AG04450 (cell line): ENCODE measurements at regions of chr1 and their contacts with region 1.

Region 1: GRCh38 chr1:234941321-234942011 is 187.2 kb downstream of the TOMM20 start:
- DNase-seq: no peak
- H3K4me3 ChIP-seq: no peak overlapping the region
- H3K27ac ChIP-seq: no peak overlapping the region
- H3K27me3 ChIP-seq: no peaks in the 10 kb centered on the region
- CTCF ChIP-seq: no peak

Region 2: DNA sequence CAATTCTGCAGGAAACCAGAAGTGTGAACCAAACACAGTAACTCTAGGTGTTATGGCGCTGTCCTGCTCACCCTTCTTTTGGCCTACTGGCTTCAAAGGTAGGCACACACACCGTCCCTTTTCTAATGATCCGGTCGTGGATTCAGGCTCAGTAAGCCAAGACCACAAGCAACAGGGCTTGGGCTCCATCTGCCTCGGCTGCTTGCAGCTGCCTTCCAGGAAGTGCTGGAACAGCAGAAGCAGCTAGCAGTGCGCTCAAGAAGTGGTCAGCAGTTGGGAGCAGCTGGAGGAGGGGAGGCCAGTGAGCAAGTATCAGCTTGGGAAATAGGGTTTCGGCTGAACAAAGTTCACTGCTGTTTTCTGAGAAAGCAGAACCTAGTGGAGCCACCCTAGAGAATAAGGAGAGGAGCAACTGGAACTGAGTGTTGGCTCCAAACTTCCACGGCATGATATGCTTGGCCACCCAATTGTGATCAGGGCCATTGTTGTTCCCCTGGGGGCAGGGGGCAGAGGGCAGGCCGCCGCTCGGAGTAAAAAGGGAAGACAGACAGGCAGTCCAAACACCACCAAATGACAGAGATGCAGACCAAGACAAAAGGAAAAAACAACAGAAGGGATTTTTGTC is 13.8 kb after region 1 on chr1:
- CTCF ChIA-PET with region 1: no interaction called
- POLR2A ChIA-PET with region 1: no interaction called
- DNase-seq: no peak
- H3K4me3 ChIP-seq: no peak overlapping the region
- H3K27ac ChIP-seq: peak overlapping the region; percentile 47
- H3K27me3 ChIP-seq: no peaks in the 10 kb centered on the region
- CTCF ChIP-seq: no peak

Region 3: GRCh38 chr1:234978397-234979295 is 37.2 kb after region 1 on chr1:
- CTCF ChIA-PET with region 1: no interaction called
- POLR2A ChIA-PET with region 1: no interaction called
- DNase-seq: no peak
- H3K4me3 ChIP-seq: no peak overlapping the region
- H3K27ac ChIP-seq: peak overlapping the region; percentile 98
- H3K27me3 ChIP-seq: no peaks in the 10 kb centered on the region
- CTCF ChIP-seq: 0 out of 2 replicates have a peak, but pooled peaks have one; percentile 17

Region 4: GRCh38 chr1:235145639-235146038 is 204.2 kb after region 1 on chr1:
- CTCF ChIA-PET with region 1: interaction called, 10 read pairs
- POLR2A ChIA-PET with region 1: no interaction called
- DNase-seq: no peak
- H3K4me3 ChIP-seq: no peak overlapping the region
- H3K27ac ChIP-seq: no peak overlapping the region
- H3K27me3 ChIP-seq: no peaks in the 10 kb centered on the region
- CTCF ChIP-seq: no peak